ENCODE measurements at regions of chr17 and their contacts with region 1.

Region 1: GRCh38 chr17:42221937-42222745 is 27.8 kb upstream of the GHDC start:
- DNase-seq: peak; percentile 7 to 85 (median 57)
- ATAC-seq: peak; percentile 87 to 95 (median 90)
- H3K4me3 ChIP-seq: no peak overlapping the region
- H3K4me3 Mint-ChIP-seq: no peak overlapping the region
- H3K27ac ChIP-seq: no peak overlapping the region
- H3K27ac Mint-ChIP-seq: peak overlapping the region; percentile 29 to 31
- H3K4me1 ChIP-seq: peaks cover 0 to 5% of the 10 kb centered on the region in 2 experiments
- H3K4me1 Mint-ChIP-seq: peaks cover 0 to 14% (median 10%) of the 10 kb centered on the region in 3 donors
- H3K27me3 ChIP-seq: no peaks in the 10 kb centered on the region
- H3K27me3 Mint-ChIP-seq: no peaks in the 10 kb centered on the region

Region 2: GRCh38 chr17:42039794-42040763 is 182.1 kb before region 1 on chr17:
- CTCF ChIA-PET with region 1: interaction called in 1 of 2 experiments, 3 read pairs
- POLR2A ChIA-PET with region 1: interaction called in 1 of 2 experiments, 15 read pairs
- DNase-seq: no peak
- ATAC-seq: peak in 1 of 4 experiments; percentile 19
- H3K4me3 ChIP-seq: peak overlapping the region in 1 of 2 donors; percentile 38
- H3K4me3 Mint-ChIP-seq: no peak overlapping the region
- H3K27ac ChIP-seq: no peak overlapping the region
- H3K27ac Mint-ChIP-seq: no peak overlapping the region
- H3K4me1 ChIP-seq: peaks cover 0 to 2% of the 10 kb centered on the region in 2 experiments
- H3K4me1 Mint-ChIP-seq: no peaks in the 10 kb centered on the region
- H3K27me3 ChIP-seq: peaks cover 0 to 29% of the 10 kb centered on the region in 2 experiments
- H3K27me3 Mint-ChIP-seq: peaks cover 0 to 18% of the 10 kb centered on the region in 2 donors

Region 3: DNA sequence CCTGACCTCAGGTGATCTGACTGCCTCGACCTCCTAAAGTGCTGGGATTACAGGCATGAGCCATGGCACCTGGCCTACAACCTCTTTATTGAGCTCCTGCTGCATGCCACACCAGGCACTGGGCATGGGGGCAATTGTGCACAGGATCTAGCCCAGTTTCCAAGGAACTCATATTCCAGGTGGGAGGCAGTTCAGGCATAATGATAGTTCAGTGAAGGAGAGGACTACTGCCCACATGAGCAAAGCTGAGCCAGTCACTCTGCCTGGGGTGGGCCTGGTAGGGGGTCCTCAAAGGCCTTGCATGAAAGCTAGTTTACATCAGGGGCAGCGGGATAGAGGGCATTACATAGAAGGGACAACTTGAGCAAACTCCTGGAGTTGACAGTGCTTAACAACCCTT is 34.3 kb before region 1 on chr17:
- CTCF ChIA-PET with region 1: interaction called in 1 of 2 experiments, 10 read pairs
- POLR2A ChIA-PET with region 1: no interaction called
- DNase-seq: no peak
- ATAC-seq: no peak
- H3K4me3 ChIP-seq: no peak overlapping the region
- H3K4me3 Mint-ChIP-seq: no peak overlapping the region
- H3K27ac ChIP-seq: no peak overlapping the region
- H3K27ac Mint-ChIP-seq: no peak overlapping the region
- H3K4me1 ChIP-seq: peaks cover 5 to 34% of the 10 kb centered on the region in 2 experiments
- H3K4me1 Mint-ChIP-seq: peaks cover 22 to 30% (median 29%) of the 10 kb centered on the region in 3 donors
- H3K27me3 ChIP-seq: no peaks in the 10 kb centered on the region
- H3K27me3 Mint-ChIP-seq: no peaks in the 10 kb centered on the region

Region 4: GRCh38 chr17:42276359-42276608 is 54.1 kb after region 1 on chr17 and contains the start of gene STAT5B:
- CTCF ChIA-PET with region 1: interaction called in 1 of 2 experiments, 18 read pairs
- POLR2A ChIA-PET with region 1: no interaction called
- DNase-seq: peak; percentile 26 to 85 (median 55)
- ATAC-seq: peak; percentile 51 to 75 (median 72)
- H3K4me3 ChIP-seq: peak within 1 kb of the TSS; percentile 84 to 92
- H3K4me3 Mint-ChIP-seq: peak within 1 kb of the TSS; percentile 95 to 100 (median 96)
- H3K27ac ChIP-seq: peak within 1 kb of the TSS; percentile 87
- H3K27ac Mint-ChIP-seq: peak within 1 kb of the TSS; percentile 95 to 98
- H3K4me1 ChIP-seq: peaks cover 12 to 27% of the 10 kb centered on the region in 2 experiments
- H3K4me1 Mint-ChIP-seq: peaks cover 45 to 59% (median 48%) of the 10 kb centered on the region in 3 donors
- H3K27me3 ChIP-seq: no peaks in the 10 kb centered on the region
- H3K27me3 Mint-ChIP-seq: no peaks in the 10 kb centered on the region
- total RNA-seq, gene STAT5B: 178 to 205 (median 186) TPM

Region 5: GRCh38 chr17:42287926-42288802 is 66.0 kb after region 1 on chr17 and contains the start of gene STAT5A:
- CTCF ChIA-PET with region 1: interaction called, 3 to 22 read pairs
- POLR2A ChIA-PET with region 1: interaction called, 5 to 7 read pairs
- DNase-seq: peak; percentile 56 to 88 (median 77)
- ATAC-seq: peak; percentile 82 to 87 (median 86)
- H3K4me3 ChIP-seq: peak within 1 kb of the TSS; percentile 88 to 90
- H3K4me3 Mint-ChIP-seq: peak within 1 kb of the TSS; percentile 88 to 95 (median 92)
- H3K27ac ChIP-seq: peak within 1 kb of the TSS; percentile 96
- H3K27ac Mint-ChIP-seq: peak within 1 kb of the TSS; percentile 95 to 98
- H3K4me1 ChIP-seq: peaks cover 19 to 57% of the 10 kb centered on the region in 2 experiments
- H3K4me1 Mint-ChIP-seq: peaks cover 49 to 60% (median 57%) of the 10 kb centered on the region in 3 donors
- H3K27me3 ChIP-seq: no peaks in the 10 kb centered on the region
- H3K27me3 Mint-ChIP-seq: no peaks in the 10 kb centered on the region
- total RNA-seq, gene STAT5A: 141 to 160 (median 147) TPM

Region 6: DNA sequence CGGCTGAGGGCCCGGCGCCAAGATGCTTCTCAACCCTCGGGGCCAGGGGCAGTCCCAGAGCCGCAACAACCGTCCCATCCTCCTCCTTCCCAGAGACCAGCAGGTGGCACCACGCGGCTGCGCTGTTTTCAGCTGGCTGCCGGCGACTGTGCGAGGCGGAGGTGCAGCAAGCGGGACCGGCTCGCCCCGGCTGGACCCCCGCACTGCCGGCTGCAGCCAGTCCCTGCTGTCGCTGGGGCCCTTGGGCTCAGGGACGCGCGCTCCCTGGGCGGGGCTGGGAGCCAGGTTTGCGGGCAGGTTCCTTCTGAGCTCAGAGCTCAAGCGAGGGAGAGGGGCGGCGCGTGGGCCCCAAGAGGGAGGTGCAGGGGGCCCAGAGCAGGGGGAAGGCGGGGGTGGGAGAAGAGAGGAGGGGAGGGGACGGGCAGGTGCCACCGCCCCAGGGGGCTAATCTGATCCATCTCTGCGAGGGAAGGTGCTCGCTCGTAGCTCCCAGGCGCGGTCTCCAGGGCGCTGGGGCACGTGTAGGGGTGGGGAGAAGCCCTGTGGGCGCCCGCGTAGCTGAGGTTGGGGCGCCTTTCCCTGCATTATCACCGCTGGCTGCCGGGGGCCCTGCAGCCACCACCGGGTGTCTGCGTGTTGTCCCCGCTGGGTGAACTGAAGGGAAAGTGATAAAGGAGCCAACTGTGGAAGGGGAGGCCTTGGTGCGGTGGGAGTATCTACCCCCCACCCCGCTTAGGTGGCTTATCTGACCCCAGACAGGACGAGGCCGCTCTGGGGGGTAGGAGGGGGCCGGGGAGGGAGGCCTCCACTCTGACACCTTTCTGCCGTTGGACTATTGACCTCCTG is 90.4 kb after region 1 on chr17:
- CTCF ChIA-PET with region 1: interaction called, 9 to 16 read pairs
- POLR2A ChIA-PET with region 1: interaction called in 1 of 2 experiments, 3 read pairs
- DNase-seq: peak; percentile 47 to 88 (median 70)
- ATAC-seq: peak; percentile 67 to 75 (median 74)
- H3K4me3 ChIP-seq: peak overlapping the region; percentile 23 to 42
- H3K4me3 Mint-ChIP-seq: peak overlapping the region; percentile 53 to 77 (median 56)
- H3K27ac ChIP-seq: peak overlapping the region; percentile 45
- H3K27ac Mint-ChIP-seq: peak overlapping the region; percentile 92 to 95
- H3K4me1 ChIP-seq: peaks cover 69 to 89% of the 10 kb centered on the region in 2 experiments
- H3K4me1 Mint-ChIP-seq: peaks cover 73 to 78% (median 77%) of the 10 kb centered on the region in 3 donors
- H3K27me3 ChIP-seq: no peaks in the 10 kb centered on the region
- H3K27me3 Mint-ChIP-seq: no peaks in the 10 kb centered on the region

Region 7: GRCh38 chr17:42405963-42406495 is 183.9 kb after region 1 on chr17:
- CTCF ChIA-PET with region 1: interaction called in 1 of 2 experiments, 12 read pairs
- POLR2A ChIA-PET with region 1: no interaction called
- DNase-seq: peak; percentile 61 to 88 (median 80)
- ATAC-seq: peak; percentile 75 to 84 (median 80)
- H3K4me3 ChIP-seq: no peak overlapping the region
- H3K4me3 Mint-ChIP-seq: no peak overlapping the region
- H3K27ac ChIP-seq: no peak overlapping the region
- H3K27ac Mint-ChIP-seq: no peak overlapping the region
- H3K4me1 ChIP-seq: peaks cover 9 to 14% of the 10 kb centered on the region in 2 experiments
- H3K4me1 Mint-ChIP-seq: peaks cover 7 to 15% (median 12%) of the 10 kb centered on the region in 3 donors
- H3K27me3 ChIP-seq: peaks cover 0 to 19% of the 10 kb centered on the region in 2 experiments
- H3K27me3 Mint-ChIP-seq: peaks cover 0 to 4% of the 10 kb centered on the region in 2 donors

Measured in T-cell (primary cell).